ENCODE measurements at regions of chr11 and their contacts with region 1.

Region 1: DNA sequence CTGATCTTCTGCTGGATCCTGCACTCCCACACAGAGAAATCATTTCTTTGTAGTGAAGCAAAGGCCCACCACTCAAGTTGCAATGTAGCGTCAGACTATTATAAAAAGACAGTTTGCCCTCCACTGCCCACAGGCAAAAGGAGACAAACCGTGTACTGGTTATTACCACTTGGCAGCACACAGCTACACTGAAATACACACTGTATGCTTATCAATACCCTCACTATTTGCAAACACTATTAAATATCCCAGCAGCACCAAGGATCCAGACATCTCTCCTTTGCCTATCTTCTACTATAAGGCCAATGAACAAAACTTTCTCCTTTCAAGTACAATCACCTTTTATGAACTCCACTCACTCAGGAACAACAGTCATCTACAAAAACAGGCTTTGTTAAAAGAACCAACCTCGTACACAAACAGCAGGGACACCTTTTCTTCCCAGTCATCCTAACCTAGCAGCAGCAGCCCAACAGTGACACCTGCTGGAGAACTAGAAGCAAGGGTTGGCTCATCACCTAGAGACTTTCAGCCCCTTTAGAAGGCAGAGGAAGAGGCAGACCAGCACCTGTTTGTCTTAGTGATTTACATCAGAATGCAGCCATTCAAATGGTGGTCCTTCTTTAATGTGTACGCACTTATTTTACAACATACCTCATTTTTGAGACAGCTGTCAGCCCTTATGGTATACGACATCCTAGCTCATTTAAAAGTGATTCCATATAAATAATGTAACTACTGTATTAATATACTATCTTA is 56.1 kb downstream of the AMBRA1 start:
- DNase-seq: peak; percentile 40
- H3K4me3 ChIP-seq: no peak overlapping the region
- H3K27ac ChIP-seq: no peak overlapping the region
- H3K4me1 ChIP-seq: peaks cover 61% of the 10 kb centered on the region
- H3K27me3 ChIP-seq: no peaks in the 10 kb centered on the region
- CTCF ChIP-seq: peak; percentile 94

Region 2: DNA sequence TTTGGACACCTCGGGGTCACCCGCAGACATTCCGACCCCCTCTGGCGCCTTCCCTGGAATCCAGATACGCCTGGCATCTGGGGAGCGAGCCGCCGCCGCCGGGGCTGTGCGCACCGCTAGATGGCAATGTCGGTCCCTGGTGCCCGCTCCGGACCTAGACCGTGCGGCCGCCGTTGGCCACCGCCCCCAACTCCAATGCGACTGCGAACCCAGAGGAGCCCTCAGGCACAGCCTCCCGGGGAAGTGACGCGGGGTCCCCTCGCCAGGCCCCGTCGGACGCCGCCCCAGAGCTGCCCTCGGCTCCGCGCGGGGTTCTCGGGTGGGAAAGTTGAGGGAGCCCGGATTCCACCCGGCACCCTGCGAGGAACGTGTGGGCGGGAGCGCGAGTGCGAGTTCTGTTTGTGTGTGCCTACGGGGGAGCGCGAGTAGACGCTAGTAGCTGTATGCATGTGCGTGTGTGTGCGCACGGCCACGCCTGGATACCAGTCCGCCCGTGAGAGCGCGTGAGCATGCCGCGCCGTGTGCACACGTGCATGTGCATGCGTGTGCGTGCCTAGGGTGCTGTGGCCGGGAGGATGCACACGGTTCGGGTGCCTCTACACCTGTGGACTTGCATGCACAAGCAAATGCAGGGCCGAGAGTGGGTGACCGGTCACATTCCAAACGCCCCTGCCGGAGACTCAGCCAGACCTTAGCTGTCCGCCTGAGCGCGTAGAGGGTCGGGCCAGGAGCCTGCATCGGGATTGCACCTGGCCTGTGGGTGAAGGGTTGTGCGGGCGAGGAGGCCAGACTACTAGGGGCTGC is 148.1 kb before region 1 on chr11:
- intact Hi-C with region 1: loop called (anchors 5 kb)
- DNase-seq: peak; percentile 67
- H3K4me3 ChIP-seq: peak overlapping the region; percentile 63
- H3K27ac ChIP-seq: no peak overlapping the region
- H3K4me1 ChIP-seq: peaks cover 44% of the 10 kb centered on the region
- H3K27me3 ChIP-seq: peaks cover 74% of the 10 kb centered on the region
- CTCF ChIP-seq: peak; percentile 93

Measured in left ventricle myocardium inferior (tissue), 1 donor.